Vagina (tissue), 2 donors: ENCODE measurements at regions of chr1 and their contacts with region 1.

Region 1: GRCh38 chr1:6438047-6438525 is 13.5 kb downstream of the ESPN start:
- DNase-seq: no peak
- H3K4me3 ChIP-seq: no peak overlapping the region
- H3K27ac ChIP-seq: no peak overlapping the region
- H3K4me1 ChIP-seq: peaks cover 9% of the 10 kb centered on the region
- H3K27me3 ChIP-seq: no peaks in the 10 kb centered on the region
- CTCF ChIP-seq: peak; percentile 46 to 89 (median 85)
- POLR2A ChIP-seq: no peak

Region 2: DNA sequence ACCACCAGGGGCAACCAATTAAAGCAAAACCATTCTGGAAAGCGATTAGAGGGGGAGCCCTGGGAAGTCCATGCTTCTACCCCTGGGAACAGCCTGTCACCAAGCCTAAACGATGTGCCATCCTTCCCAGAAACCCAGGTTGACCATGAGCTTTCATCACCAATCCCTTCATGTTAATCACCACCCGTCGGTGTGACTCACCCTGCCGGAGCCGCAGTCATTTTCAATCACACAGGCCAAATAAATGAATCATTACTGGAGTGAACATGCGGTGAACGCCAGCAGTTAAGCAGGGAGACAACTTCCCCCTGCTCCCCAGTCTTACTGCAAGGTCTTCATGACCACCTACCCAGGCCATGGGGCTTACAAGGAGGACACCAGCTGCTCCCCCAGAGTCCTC is 1474.8 kb before region 1 on chr1:
- intact Hi-C with region 1: no loop called
- DNase-seq: no peak
- H3K4me3 ChIP-seq: no peak overlapping the region
- H3K27ac ChIP-seq: no peak overlapping the region
- H3K4me1 ChIP-seq: no peaks in the 10 kb centered on the region
- H3K27me3 ChIP-seq: no peaks in the 10 kb centered on the region
- CTCF ChIP-seq: no peak
- POLR2A ChIP-seq: no peak

Region 3: DNA sequence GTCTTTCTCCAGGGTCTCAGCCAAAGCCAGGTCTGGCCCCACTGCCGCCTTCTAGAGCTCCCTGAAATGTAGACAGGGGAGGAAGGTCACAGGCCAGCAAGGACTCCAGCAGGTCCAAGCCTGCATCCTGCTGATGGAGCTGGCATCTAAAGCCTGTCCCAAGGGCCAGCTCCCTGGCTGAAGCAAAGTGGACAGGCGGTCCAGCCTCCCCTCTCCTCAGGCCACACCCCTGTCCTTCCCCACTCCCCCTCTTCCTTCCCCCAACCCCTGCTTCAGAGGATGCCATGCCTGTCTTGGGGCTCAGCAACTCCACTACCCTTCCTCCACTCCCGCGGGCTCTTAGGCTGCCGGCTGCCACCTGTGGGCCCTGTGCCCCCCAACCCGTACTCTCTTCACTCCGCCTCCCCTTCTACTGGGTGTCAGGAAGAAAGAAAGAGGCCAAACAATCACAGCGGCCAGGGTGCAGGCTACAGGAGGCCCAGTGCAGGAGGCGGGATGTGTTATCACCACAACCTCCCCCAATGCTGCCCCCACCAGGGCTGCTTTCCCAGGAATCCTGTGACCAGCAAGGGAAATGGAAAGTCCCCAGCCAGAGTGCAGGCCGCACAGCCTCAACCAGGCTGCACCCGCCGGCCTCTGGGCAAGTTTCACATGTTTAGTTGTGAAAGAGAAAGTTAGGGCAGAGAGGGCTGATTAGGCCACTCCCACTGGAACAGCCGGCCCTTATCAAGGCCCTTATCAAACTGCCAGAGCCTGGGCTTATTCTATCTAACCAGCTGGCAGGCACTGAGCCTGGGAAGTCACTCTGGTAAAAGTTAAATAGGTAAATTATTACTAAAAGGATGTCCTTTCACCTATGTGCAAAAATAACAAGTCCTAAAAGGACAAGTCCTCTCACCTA is 78.6 kb before region 1 on chr1:
- intact Hi-C with region 1: loop called (anchors 10 kb)
- DNase-seq: no peak
- H3K4me3 ChIP-seq: peak overlapping the region in 1 of 2 donors; percentile 22
- H3K27ac ChIP-seq: peak overlapping the region; percentile 71
- H3K4me1 ChIP-seq: peaks cover 36% of the 10 kb centered on the region
- H3K27me3 ChIP-seq: no peaks in the 10 kb centered on the region
- CTCF ChIP-seq: no peak
- POLR2A ChIP-seq: no peak

Region 4: DNA sequence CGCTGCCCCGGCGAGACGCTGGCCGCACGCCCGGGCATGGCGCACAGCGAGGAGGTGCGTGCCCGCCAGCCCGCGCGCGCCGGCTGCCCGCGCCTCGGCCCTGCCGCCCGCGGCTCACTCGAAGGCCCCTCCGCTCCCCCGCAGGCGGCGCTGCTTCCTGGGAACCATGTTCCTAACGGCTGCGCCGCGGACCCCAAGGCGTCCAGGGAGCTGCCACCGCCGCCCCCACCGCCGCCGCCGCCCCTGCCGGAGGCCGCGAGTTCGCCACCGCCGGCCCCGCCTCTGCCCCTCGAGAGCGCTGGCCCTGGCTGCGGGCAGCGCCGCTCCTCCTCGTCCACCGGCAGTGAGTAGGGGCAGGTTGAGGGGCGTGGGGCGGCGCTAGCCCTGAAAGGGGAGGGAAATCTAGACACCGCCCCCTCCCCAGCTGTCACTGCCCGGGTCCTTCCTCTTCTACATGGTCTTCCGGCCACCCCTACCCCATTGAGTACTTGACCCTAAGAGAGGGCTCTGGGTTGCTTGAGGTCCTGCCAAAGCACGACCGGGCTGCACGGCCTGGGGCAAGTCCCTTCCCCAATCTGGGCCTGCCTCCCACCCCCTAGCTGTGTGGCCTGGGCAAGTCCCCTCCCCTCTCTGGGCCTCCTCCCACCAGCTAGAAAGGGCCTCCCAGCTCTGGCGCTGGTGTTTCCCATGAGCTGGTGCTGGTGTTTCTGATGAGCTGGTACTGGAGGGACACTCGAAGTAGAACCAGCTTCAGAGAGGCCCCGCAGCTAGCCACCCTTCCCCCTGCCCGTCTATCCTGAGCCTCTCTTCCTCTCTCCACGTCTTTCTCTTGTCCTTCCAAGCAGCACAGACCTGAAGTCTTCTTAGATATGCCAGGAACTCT is 10.9 kb after region 1 on chr1:
- intact Hi-C with region 1: no loop called
- DNase-seq: no peak
- H3K4me3 ChIP-seq: peak overlapping the region; percentile 11 to 32
- H3K27ac ChIP-seq: no peak overlapping the region
- H3K4me1 ChIP-seq: peaks cover 18% of the 10 kb centered on the region
- H3K27me3 ChIP-seq: peaks cover 6% of the 10 kb centered on the region
- CTCF ChIP-seq: no peak
- POLR2A ChIP-seq: no peak